ENCODE measurements at regions of chr5 and their contacts with region 1.

Region 1: DNA sequence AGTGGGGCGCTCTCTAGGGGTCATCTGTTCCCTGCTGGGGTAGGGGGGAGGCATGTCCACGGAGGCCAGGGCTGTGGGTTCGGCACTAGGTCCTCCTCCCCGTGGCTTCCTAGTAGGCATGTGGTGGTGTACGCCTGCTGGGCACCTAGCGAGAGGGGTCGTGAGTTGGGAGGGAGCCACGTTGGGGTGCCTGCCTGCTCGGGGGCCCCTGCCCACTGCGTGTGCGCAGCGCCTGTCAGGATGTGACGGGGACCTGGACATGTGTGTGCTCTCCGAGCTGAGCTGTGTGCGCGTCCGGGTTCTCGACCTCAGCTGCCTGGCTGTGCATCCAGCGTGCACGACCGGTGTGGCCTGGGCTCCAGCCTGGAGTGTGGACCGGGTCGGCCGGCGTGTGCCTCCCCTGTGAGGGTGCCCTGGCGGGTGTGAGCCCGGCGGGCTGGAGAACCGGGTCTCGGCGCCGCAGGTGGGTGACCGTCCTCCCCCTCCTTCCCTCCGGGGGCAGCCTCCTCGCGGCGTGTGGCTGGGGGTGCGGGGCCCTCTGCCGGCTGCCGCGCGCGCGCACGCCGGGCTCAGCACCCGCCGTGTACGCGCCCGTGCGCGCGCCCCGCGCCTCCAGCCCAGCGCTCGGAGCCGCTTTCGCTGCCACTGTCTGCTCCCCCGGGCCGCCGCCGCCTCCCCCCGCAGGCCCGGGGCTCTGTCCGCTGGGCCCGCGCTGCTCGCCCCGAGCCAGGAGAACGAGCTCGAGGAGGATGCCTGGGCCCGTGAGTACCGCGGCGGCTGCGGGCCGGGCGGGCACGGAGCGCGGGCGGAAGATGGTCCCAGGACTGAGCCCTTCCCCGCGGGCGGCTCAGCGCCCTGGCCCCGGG is at the start of gene PRR7:
- DNase-seq: no peak
- H3K4me3 ChIP-seq: peak within 1 kb of the TSS; percentile 54
- CTCF ChIP-seq: no peak

Region 2: DNA sequence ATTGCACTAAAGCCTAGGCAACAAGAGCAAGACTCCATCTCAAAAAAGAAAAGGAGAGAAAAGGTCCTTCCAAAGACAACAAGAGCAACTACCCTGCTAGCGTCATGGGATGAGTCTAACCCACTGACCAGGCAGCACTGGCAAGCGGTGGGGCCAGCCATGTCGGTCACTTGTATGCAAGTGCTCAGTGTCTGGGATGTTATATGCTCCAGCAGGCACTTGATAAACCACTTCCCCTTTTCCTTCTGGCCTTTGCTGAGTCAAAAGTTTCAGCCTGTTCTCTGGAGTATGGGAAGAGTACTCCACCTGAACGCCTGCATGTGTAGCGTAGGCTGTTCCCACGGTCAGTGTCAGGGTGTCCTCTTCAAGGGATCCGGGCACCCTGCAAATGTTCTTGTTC is 125.6 kb before region 1 on chr5:
- in situ Hi-C with region 1: loop called (anchors 5 kb)
- DNase-seq: no peak
- H3K4me3 ChIP-seq: no peak overlapping the region
- CTCF ChIP-seq: no peak

Region 3: DNA sequence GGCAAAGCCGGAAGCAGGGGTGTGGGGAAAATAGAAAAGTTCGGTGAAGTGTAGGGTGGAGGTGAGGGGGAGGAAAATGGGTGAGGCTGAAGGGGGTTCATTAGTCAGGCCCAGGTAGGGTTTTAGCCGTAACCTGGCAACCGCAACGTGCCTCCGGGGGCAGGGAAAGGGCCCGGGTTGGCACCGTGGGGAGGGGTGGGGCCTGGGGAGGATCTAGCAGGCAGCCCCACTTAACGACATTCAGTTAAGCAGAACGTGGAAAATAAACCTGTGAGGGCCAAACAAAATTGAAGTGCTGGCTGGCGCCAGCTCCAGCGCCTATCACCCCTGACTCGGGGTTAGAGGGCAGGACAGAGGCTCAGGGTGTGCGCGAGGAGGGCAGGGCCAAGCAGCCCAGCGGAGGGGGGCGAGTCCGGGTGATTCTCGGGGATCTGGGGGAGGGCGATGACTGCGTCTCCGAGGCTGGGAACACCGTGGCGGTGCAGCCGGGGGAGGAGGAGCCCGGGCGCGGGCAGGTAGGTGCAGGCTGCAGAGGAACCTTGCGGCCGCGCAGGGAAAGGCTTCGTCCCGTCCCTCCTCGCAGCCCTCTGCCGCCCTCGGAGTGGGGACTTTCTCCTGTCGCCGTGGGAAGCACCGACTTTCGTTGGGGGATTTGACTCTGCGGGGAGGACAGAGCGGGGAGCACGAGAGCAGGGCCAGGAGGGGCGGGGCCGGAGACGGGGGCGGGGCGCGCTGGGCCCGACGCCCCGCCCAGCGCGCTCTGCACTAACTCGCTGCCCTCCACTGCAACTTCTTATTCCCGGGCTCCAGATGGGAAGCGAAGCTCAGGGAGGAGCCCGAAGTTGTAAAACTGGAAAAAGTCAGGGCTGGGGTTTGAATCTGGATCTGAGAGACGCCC is 83.6 kb before region 1 on chr5:
- in situ Hi-C with region 1: loop called (anchors 5 kb)
- DNase-seq: no peak
- H3K4me3 ChIP-seq: peak overlapping the region; percentile 36
- CTCF ChIP-seq: peak; percentile 1

Region 4: GRCh38 chr5:177405805-177406204 is 40.6 kb before region 1 on chr5:
- in situ Hi-C with region 1: loop called (anchors 5 kb)
- DNase-seq: no peak
- H3K4me3 ChIP-seq: no peak overlapping the region
- CTCF ChIP-seq: no peak

Region 5: GRCh38 chr5:177520916-177521910 is 74.8 kb after region 1 on chr5:
- in situ Hi-C with region 1: no loop called
- DNase-seq: no peak
- H3K4me3 ChIP-seq: no peak overlapping the region
- CTCF ChIP-seq: no peak

Measured in astrocyte of the cerebellum (primary cell).